ENCODE measurements at regions of chr14 and their contacts with region 1.

Region 1: GRCh38 chr14:100383727-100384158 is 60.6 kb downstream of the SLC25A47 start:
- DNase-seq: peak; percentile 74
- H3K4me3 Mint-ChIP-seq: no peak overlapping the region
- H3K27ac Mint-ChIP-seq: no peak overlapping the region
- H3K4me1 Mint-ChIP-seq: peaks cover 17% of the 10 kb centered on the region
- H3K27me3 Mint-ChIP-seq: no peaks in the 10 kb centered on the region

Region 2: GRCh38 chr14:100419856-100420255 is 36.1 kb after region 1 on chr14:
- CTCF ChIA-PET with region 1: interaction called, 15 read pairs
- POLR2A ChIA-PET with region 1: no interaction called
- DNase-seq: no peak
- H3K4me3 Mint-ChIP-seq: no peak overlapping the region
- H3K27ac Mint-ChIP-seq: no peak overlapping the region
- H3K4me1 Mint-ChIP-seq: peaks cover 6% of the 10 kb centered on the region
- H3K27me3 Mint-ChIP-seq: no peaks in the 10 kb centered on the region

Region 3: DNA sequence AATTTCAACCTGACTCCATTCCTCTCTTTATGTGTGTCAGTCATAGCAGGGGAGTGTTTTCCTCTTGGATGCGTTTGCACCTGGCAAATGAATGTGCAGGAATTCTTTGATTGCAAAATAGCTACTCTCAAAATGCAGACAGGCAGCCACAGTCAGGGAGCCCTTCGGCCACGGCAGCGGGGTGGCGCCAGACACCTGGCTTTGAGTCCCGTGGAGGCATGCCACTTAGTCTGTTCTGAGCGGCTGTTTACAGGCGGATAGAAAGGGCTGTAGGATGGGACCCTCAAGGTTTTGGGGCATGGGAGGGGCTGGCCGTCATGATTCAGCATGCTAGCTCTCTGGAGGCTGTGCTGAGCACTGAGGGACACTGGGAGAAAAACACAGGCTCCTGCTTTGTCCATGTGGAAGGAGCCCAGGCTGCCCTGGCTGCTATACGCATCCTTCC is 56.5 kb after region 1 on chr14:
- CTCF ChIA-PET with region 1: interaction called, 10 read pairs
- POLR2A ChIA-PET with region 1: no interaction called
- DNase-seq: peak; percentile 38
- H3K4me3 Mint-ChIP-seq: no peak overlapping the region
- H3K27ac Mint-ChIP-seq: no peak overlapping the region
- H3K4me1 Mint-ChIP-seq: peaks cover 26% of the 10 kb centered on the region
- H3K27me3 Mint-ChIP-seq: no peaks in the 10 kb centered on the region

Region 4: DNA sequence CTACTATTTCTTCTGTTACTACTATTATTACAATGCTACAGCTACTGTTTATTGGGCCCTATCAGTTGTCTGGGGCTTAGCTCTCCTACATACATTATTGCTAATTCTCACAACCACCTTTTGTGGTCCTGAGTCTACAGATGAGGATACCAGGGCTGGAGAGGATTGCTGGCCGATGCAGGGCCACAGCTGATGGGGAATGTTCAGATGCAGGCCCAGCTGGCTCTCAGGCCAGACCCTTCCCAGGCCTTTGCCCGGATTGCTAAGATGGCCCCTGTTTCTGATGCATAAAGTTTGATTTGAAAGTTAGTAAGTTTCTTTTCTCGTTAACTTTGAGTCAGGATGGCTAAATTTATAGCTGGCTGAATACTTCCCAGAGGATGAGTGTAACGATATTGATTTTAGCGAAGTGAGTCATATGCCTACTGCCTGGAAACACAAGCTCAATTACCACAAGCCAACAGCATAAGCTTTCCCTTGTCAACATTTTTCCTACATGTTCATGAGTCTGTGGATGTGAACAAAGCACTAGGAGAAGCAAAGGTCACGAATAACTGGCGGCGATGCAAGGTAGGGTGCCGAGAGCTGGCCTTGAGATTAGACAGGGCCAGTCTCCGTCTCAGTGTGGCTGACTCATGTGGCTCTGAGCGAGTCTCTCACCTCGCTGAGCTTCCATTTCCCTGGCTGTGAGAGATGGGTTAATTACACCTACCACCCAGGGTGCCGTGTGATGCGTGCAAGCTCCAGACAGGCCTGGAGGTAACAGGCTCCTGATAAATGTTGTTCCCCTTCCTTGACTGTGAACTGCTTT is 92.5 kb after region 1 on chr14:
- CTCF ChIA-PET with region 1: no interaction called
- POLR2A ChIA-PET with region 1: no interaction called
- DNase-seq: no peak
- H3K4me3 Mint-ChIP-seq: no peak overlapping the region
- H3K27ac Mint-ChIP-seq: no peak overlapping the region
- H3K4me1 Mint-ChIP-seq: peaks cover 2% of the 10 kb centered on the region
- H3K27me3 Mint-ChIP-seq: no peaks in the 10 kb centered on the region

Region 5: GRCh38 chr14:100654814-100655740 is 271.3 kb after region 1 on chr14:
- CTCF ChIA-PET with region 1: interaction called, 195 read pairs
- POLR2A ChIA-PET with region 1: interaction called, 7 read pairs
- DNase-seq: peak; percentile 51
- H3K4me3 Mint-ChIP-seq: no peak overlapping the region
- H3K27ac Mint-ChIP-seq: no peak overlapping the region
- H3K4me1 Mint-ChIP-seq: peaks cover 3% of the 10 kb centered on the region
- H3K27me3 Mint-ChIP-seq: peaks cover 14% of the 10 kb centered on the region

Region 6: DNA sequence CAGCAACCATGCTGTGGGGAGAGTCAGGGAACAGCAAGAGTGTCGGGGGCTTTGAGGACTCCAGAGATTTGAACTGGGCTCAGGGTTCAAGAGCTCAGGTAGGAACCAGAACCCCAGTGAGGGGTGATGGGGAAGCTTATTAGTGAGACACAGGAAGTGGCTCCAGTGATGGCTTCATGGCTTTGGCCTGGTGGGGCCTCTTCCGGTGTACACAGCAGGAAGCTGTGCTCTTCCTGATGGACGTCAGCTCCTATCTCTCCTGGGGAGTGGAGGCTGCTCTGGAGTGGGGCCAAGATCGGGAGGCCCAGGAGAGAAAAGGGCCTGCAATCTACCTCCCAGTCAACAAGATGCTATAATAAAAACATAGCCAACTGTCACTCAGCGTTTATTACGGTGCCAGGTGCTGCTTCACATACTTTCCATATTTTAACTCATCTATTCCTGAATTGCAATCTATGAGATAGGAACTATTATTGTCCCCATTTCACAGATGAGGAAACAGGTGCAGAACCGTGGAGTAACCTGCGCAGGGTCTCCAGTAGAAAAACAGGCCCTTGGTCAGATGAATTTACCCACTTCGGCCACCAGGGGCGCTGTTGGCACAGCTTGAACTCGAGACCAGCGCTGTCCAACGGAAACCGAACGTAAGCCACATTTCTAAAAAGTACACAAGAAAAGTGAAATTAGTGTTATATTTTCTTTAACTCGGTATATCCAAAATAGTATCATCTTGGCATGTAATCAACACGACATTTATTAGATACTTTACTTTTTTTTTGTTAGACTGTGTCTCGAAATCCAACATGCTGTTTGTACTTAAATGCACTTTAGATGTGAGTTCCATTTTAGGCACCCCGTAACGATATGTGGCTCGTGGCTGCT is 279.4 kb after region 1 on chr14:
- CTCF ChIA-PET with region 1: interaction called, 195 read pairs
- POLR2A ChIA-PET with region 1: no interaction called
- DNase-seq: peak; percentile 64
- H3K4me3 Mint-ChIP-seq: no peak overlapping the region
- H3K27ac Mint-ChIP-seq: no peak overlapping the region
- H3K4me1 Mint-ChIP-seq: peaks cover 5% of the 10 kb centered on the region
- H3K27me3 Mint-ChIP-seq: peaks cover 3% of the 10 kb centered on the region

Measured in activated CD4-positive, alpha-beta memory T cell treated with anti-CD3 and anti-CD28 coated beads, Interleukin-2, amount 10 ng/mL, durations not matched to agents 7 days and 5 days (primary cell).